Activated naive CD4-positive, alpha-beta T cell treated with anti-CD3 and anti-CD28 coated beads for 36 hours (primary cell): ENCODE measurements at regions of chr17 and their contacts with region 1.

Region 1: DNA sequence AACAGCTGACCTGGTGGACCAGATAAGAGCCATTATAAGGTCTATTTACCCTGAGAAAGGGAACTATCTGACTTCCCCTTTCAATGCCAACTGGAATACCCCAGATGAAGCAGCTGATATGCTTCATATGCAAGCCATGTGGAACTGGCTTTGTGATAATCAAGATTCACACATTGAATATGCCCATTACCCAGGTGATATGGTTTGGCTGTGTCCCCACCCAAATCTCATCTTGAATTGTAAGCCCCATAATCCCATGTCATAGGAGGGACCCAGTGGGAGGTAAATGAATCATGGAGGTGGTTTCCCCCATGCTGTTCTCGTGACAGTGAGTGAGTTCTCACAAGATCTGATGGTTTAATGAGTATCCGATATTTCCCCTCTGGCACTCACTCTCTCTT is 42.1 kb downstream of the IKZF3 start:
- DNase-seq: peak; percentile 49
- H3K4me3 Mint-ChIP-seq: no peak overlapping the region
- H3K27ac Mint-ChIP-seq: no peak overlapping the region
- H3K4me1 Mint-ChIP-seq: peaks cover 52% of the 10 kb centered on the region
- H3K27me3 Mint-ChIP-seq: no peaks in the 10 kb centered on the region

Region 2: DNA sequence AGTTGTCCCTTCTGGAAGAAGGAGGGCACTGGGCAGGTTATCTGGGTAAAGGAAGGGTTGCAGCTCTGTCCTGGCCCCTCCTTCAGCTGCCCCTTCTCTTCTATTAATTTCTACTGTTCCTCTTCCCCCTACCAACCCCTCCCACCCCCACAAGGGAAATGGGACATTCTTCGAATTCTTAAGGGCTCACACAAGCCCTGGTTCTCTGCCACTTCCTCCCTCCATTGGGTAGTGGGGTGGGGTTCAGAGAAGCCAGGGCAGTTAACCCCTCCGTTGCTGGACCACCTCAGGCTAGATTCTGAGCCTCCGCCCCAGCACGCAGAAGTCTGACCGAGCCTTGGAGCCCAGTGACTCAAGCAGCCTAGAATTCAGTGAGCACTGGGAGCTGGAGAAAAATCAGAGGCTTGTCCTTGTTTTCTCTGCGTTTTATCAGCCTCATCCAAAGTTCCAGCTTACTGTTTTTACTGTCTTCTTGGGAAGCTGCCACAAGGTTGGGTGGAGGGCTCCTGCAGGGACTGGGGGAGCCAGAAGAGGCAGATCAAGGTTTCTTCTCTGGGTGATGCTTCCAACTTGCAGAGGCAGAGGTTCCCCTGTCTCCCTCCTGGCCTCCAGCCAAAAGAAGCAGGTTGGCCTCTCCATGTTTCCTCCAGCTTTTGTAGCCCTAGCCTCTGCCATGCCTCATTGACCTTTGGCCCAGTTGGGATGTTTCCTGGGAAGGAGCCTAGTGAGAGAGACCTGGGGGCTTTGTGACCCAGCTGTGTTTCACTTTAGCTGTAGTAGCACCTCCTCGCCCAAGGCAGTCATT is 942.0 kb before region 1 on chr17:
- CTCF ChIA-PET with region 1: no interaction called
- intact Hi-C with region 1: no loop called
- DNase-seq: peak; percentile 17
- H3K4me3 Mint-ChIP-seq: no peak overlapping the region
- H3K27ac Mint-ChIP-seq: peak overlapping the region; percentile 93
- H3K4me1 Mint-ChIP-seq: peaks cover 88% of the 10 kb centered on the region
- H3K27me3 Mint-ChIP-seq: no peaks in the 10 kb centered on the region

Region 3: GRCh38 chr17:39791111-39791992 is 30.7 kb before region 1 on chr17:
- CTCF ChIA-PET with region 1: interaction called, 4 read pairs
- intact Hi-C with region 1: loop called (anchors 1 kb)
- DNase-seq: peak; percentile 75
- H3K4me3 Mint-ChIP-seq: no peak overlapping the region
- H3K27ac Mint-ChIP-seq: peak overlapping the region; percentile 86
- H3K4me1 Mint-ChIP-seq: peaks cover 57% of the 10 kb centered on the region
- H3K27me3 Mint-ChIP-seq: no peaks in the 10 kb centered on the region

Region 4: DNA sequence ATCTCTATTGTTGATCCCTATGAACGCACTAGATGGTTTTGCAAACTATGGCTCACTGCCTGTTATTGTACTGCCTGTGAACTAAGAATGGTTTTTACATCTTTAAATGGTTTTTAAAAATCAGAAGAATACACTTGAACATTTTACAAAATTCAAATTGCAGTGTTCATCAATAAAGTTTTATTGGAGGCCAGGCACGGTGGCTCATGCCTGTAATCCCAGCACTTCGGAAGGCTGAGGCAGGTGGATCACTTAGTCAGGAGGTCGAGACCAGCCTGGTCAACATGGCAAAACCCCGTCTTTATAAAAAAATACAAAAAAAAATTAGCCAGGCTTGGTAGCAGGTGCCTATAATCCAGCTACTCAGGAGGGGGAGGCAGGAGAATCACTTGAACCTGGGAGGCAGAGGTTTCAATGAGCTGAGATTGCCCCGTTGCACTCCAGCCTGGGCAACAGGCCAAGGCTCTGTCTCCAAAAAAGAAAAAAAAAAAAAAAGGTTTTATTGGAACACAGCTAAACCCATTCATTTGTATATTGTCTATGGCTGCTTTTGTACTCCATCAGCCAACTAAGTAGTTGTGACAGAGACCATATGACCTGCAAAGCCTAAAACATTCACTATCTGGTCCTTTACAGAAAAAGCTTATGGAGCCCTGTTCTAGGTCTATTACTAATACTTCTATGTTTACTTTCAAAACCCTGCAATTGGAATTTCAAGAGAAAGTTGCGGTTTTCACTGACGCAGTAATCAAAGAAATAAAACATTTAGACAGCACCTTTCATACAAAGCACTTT is 23.2 kb after region 1 on chr17:
- CTCF ChIA-PET with region 1: interaction called, 4 read pairs
- intact Hi-C with region 1: loop called (anchors 1 kb)
- DNase-seq: no peak
- H3K4me3 Mint-ChIP-seq: no peak overlapping the region
- H3K27ac Mint-ChIP-seq: peak overlapping the region; percentile 15
- H3K4me1 Mint-ChIP-seq: peaks cover 69% of the 10 kb centered on the region
- H3K27me3 Mint-ChIP-seq: no peaks in the 10 kb centered on the region